Caco-2 (cell line): ENCODE measurements at regions of chr17 and their contacts with region 1.

Region 1: GRCh38 chr17:143782-144281 is 6.5 kb downstream of the SCGB1C2 start:
- DNase-seq: peak; percentile 84 to 96
- H3K4me3 ChIP-seq: no peak overlapping the region
- H3K4me3 Mint-ChIP-seq: no peak overlapping the region
- H3K27ac Mint-ChIP-seq: no peak overlapping the region
- H3K4me1 ChIP-seq: peaks cover 5% of the 10 kb centered on the region; the same call in 1 of the 2 replicates
- H3K4me1 Mint-ChIP-seq: no peaks in the 10 kb centered on the region
- H3K27me3 ChIP-seq: no peaks in the 10 kb centered on the region
- H3K27me3 Mint-ChIP-seq: peaks cover 11% of the 10 kb centered on the region
- CTCF ChIP-seq: peak; percentile 80 to 95

Region 2: GRCh38 chr17:181215-182049 is 37.6 kb after region 1 on chr17 and contains the start of gene DOC2B:
- CTCF ChIA-PET with region 1: no interaction called
- POLR2A ChIA-PET with region 1: no interaction called
- intact Hi-C with region 1: no loop called
- DNase-seq: peak in 1 of 2 experiments; percentile 52
- H3K4me3 ChIP-seq: peak within 1 kb of the TSS; percentile 30
- H3K4me3 Mint-ChIP-seq: peak within 1 kb of the TSS; percentile 56
- H3K27ac Mint-ChIP-seq: no peak within 1 kb of the TSS
- H3K4me1 ChIP-seq: peaks cover 4% of the 10 kb centered on the region; the same call in 1 of the 2 replicates
- H3K4me1 Mint-ChIP-seq: no peaks in the 10 kb centered on the region
- H3K27me3 ChIP-seq: peaks cover 1% of the 10 kb centered on the region
- H3K27me3 Mint-ChIP-seq: peaks cover 35% of the 10 kb centered on the region
- CTCF ChIP-seq: no peak
- total RNA-seq, gene DOC2B: 0.35 TPM in 1 of 2 replicates, not detected in the other

Region 3: GRCh38 chr17:266701-267667 is 123.2 kb after region 1 on chr17:
- CTCF ChIA-PET with region 1: no interaction called
- POLR2A ChIA-PET with region 1: no interaction called
- intact Hi-C with region 1: no loop called
- DNase-seq: peak in 1 of 2 experiments; percentile 17
- H3K4me3 ChIP-seq: no peak overlapping the region
- H3K4me3 Mint-ChIP-seq: no peak overlapping the region
- H3K27ac Mint-ChIP-seq: no peak overlapping the region
- H3K4me1 ChIP-seq: no peaks in the 10 kb centered on the region
- H3K4me1 Mint-ChIP-seq: no peaks in the 10 kb centered on the region
- H3K27me3 ChIP-seq: no peaks in the 10 kb centered on the region
- H3K27me3 Mint-ChIP-seq: no peaks in the 10 kb centered on the region
- CTCF ChIP-seq: no peak

Region 4: GRCh38 chr17:996554-997344 is 852.9 kb after region 1 on chr17 and contains the start of gene TIMM22:
- CTCF ChIA-PET with region 1: no interaction called
- POLR2A ChIA-PET with region 1: no interaction called
- intact Hi-C with region 1: loop called (anchors 5 kb)
- DNase-seq: peak; percentile 97
- H3K4me3 ChIP-seq: peak within 1 kb of the TSS; percentile 87
- H3K4me3 Mint-ChIP-seq: peak within 1 kb of the TSS; percentile 97
- H3K27ac Mint-ChIP-seq: peak within 1 kb of the TSS; percentile 99
- H3K4me1 ChIP-seq: peaks cover 10% of the 10 kb centered on the region
- H3K4me1 Mint-ChIP-seq: peaks cover 11% of the 10 kb centered on the region
- H3K27me3 ChIP-seq: no peaks in the 10 kb centered on the region
- H3K27me3 Mint-ChIP-seq: no peaks in the 10 kb centered on the region
- CTCF ChIP-seq: peak; percentile 93 to 95
- total RNA-seq, gene TIMM22: 20.1 and 20.6 TPM in 2 replicates